ENCODE measurements at regions of chr10 and their contacts with region 1.

Region 1: GRCh38 chr10:30639946-30640786 is 10.6 kb upstream of the LYZL2 start:
- DNase-seq: peak; percentile 49 to 77
- ATAC-seq: 0 out of 6 replicates have a peak, but pooled peaks of 1 of the 2 experiments have one; percentile 41
- H3K4me3 ChIP-seq: no peak overlapping the region
- H3K27ac ChIP-seq: no peak overlapping the region
- H3K4me1 ChIP-seq: peaks cover 16% of the 10 kb centered on the region
- CTCF ChIP-seq: peak; percentile 77
- EP300 ChIP-seq: no peak
- POLR2A ChIP-seq: no peak
- RAD21 ChIP-seq: peak; percentile 42 to 59; a peak in 4 of 5 replicates

Region 2: GRCh38 chr10:30447125-30447799 is 192.9 kb before region 1 on chr10:
- CTCF ChIA-PET with region 1: no interaction called
- POLR2A ChIA-PET with region 1: no interaction called
- DNase-seq: no peak
- ATAC-seq: no peak
- H3K4me3 ChIP-seq: no peak overlapping the region
- H3K27ac ChIP-seq: no peak overlapping the region
- H3K4me1 ChIP-seq: peaks cover 6% of the 10 kb centered on the region; the same call in 1 of the 3 replicates
- CTCF ChIP-seq: no peak
- EP300 ChIP-seq: no peak
- POLR2A ChIP-seq: no peak
- RAD21 ChIP-seq: no peak

Region 3: GRCh38 chr10:30606313-30606712 is 33.9 kb before region 1 on chr10:
- CTCF ChIA-PET with region 1: interaction called, 58 read pairs
- POLR2A ChIA-PET with region 1: no interaction called
- DNase-seq: peak in 1 of 2 experiments; percentile 44
- ATAC-seq: peak in 1 of 2 experiments; percentile 37; a peak in 3 of 6 replicates
- H3K4me3 ChIP-seq: peak overlapping the region; percentile 13; the same call in 1 of the 3 replicates
- H3K27ac ChIP-seq: peak overlapping the region; percentile 80 to 86
- H3K4me1 ChIP-seq: peaks cover 29% of the 10 kb centered on the region
- CTCF ChIP-seq: no peak
- EP300 ChIP-seq: no peak
- POLR2A ChIP-seq: no peak
- RAD21 ChIP-seq: no peak

Region 4: DNA sequence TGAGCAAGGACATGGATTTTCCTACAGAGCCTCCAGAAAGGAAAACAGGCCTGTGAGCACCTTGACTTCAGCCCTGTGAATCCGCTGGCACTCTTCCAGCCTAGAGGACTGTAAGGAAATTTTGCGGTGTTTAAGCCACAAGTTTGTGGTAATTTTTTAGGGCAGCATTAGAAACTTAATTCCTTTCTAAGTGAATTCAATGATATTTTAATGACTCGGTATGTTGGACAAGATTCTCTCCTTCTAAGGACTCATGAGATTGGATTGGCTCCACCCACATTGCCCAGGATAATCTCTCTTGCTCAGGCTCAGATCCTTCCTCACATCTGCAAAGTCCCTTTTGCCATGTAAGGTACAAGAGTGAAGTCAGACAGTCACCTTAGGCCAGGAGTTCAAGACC is 15.1 kb before region 1 on chr10:
- CTCF ChIA-PET with region 1: interaction called, 32 read pairs
- POLR2A ChIA-PET with region 1: no interaction called
- DNase-seq: no peak
- ATAC-seq: no peak
- H3K4me3 ChIP-seq: no peak overlapping the region
- H3K27ac ChIP-seq: peak overlapping the region in 1 of 2 experiments; percentile 31; a peak in 1 of 6 replicates
- H3K4me1 ChIP-seq: no peaks in the 10 kb centered on the region
- CTCF ChIP-seq: no peak
- EP300 ChIP-seq: no peak
- POLR2A ChIP-seq: no peak
- RAD21 ChIP-seq: no peak

Region 5: GRCh38 chr10:30656233-30656632 is 16.1 kb after region 1 on chr10:
- CTCF ChIA-PET with region 1: interaction called, 26 read pairs
- POLR2A ChIA-PET with region 1: no interaction called
- DNase-seq: no peak
- ATAC-seq: no peak
- H3K4me3 ChIP-seq: no peak overlapping the region
- H3K27ac ChIP-seq: no peak overlapping the region
- H3K4me1 ChIP-seq: no peaks in the 10 kb centered on the region
- CTCF ChIP-seq: no peak
- EP300 ChIP-seq: no peak
- POLR2A ChIP-seq: no peak
- RAD21 ChIP-seq: no peak

Region 6: GRCh38 chr10:30662814-30663213 is 22.6 kb after region 1 on chr10:
- CTCF ChIA-PET with region 1: interaction called, 13 read pairs
- POLR2A ChIA-PET with region 1: no interaction called
- DNase-seq: no peak
- ATAC-seq: no peak
- H3K4me3 ChIP-seq: no peak overlapping the region
- H3K27ac ChIP-seq: no peak overlapping the region
- H3K4me1 ChIP-seq: no peaks in the 10 kb centered on the region
- CTCF ChIP-seq: no peak
- EP300 ChIP-seq: no peak
- POLR2A ChIP-seq: no peak
- RAD21 ChIP-seq: no peak

Region 7: GRCh38 chr10:30671026-30671616 is 31.0 kb after region 1 on chr10:
- CTCF ChIA-PET with region 1: interaction called, 35 read pairs
- POLR2A ChIA-PET with region 1: no interaction called
- DNase-seq: peak; percentile 33 to 84
- ATAC-seq: peak; percentile 81 to 93
- H3K4me3 ChIP-seq: no peak overlapping the region
- H3K27ac ChIP-seq: 0 out of 6 replicates have a peak overlapping the region, but pooled peaks of 1 of the 2 experiments have one; percentile 1
- H3K4me1 ChIP-seq: 0 out of 3 replicates have a peak, but pooled peaks cover 5% of the 10 kb centered on the region
- CTCF ChIP-seq: peak; percentile 87
- EP300 ChIP-seq: no peak
- POLR2A ChIP-seq: no peak
- RAD21 ChIP-seq: peak; percentile 69 to 77

Region 8: GRCh38 chr10:30687698-30688219 is 47.6 kb after region 1 on chr10:
- CTCF ChIA-PET with region 1: interaction called, 10 read pairs
- POLR2A ChIA-PET with region 1: no interaction called
- DNase-seq: peak; percentile 79 to 83
- ATAC-seq: peak; percentile 95 to 98
- H3K4me3 ChIP-seq: no peak overlapping the region
- H3K27ac ChIP-seq: no peak overlapping the region; a peak in 1 of 6 replicates
- H3K4me1 ChIP-seq: peaks cover 9% of the 10 kb centered on the region
- CTCF ChIP-seq: peak; percentile 88
- EP300 ChIP-seq: no peak
- POLR2A ChIP-seq: no peak
- RAD21 ChIP-seq: peak; percentile 85 to 86

Region 9: GRCh38 chr10:31051703-31052102 is 411.5 kb after region 1 on chr10:
- CTCF ChIA-PET with region 1: no interaction called
- POLR2A ChIA-PET with region 1: no interaction called
- DNase-seq: peak; percentile 36 to 54
- ATAC-seq: peak; percentile 76 to 83
- H3K4me3 ChIP-seq: no peak overlapping the region
- H3K27ac ChIP-seq: peak overlapping the region; percentile 24 to 73; a peak in 5 of 6 replicates
- H3K4me1 ChIP-seq: peaks cover 12% of the 10 kb centered on the region; the same call in 2 of the 3 replicates
- CTCF ChIP-seq: no peak
- EP300 ChIP-seq: no peak
- POLR2A ChIP-seq: no peak
- RAD21 ChIP-seq: no peak